AG04450 (cell line): ENCODE measurements at regions of chr7 and their contacts with region 1.

Region 1: DNA sequence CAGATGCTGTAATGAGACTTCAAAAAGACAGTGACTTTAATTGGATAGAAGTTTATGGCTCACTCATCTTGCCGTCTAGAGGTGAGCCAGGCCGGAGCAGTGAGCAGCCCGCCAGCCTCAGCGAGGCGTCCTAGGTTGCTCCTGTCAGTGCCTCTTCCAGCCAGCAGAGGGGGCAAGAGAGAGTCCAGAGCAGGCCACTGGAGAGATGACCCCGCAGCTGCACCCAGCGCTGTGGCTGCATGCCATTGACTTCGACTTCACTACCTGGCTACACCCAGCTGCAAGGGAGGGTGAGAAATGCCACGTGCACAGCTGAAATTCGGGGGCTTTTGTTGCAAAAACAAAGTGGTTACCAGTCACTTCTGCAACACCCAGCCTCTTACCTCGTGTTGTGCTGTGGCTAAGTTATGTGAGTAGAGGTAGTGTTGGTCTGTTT is 26.5 kb downstream of the NUB1 start:
- DNase-seq: peak; percentile 39
- H3K4me3 ChIP-seq: no peak overlapping the region
- H3K27ac ChIP-seq: no peak overlapping the region
- H3K27me3 ChIP-seq: no peaks in the 10 kb centered on the region
- CTCF ChIP-seq: peak; percentile 97

Region 2: GRCh38 chr7:150924369-150924781 is 443.8 kb before region 1 on chr7:
- CTCF ChIA-PET with region 1: no interaction called
- POLR2A ChIA-PET with region 1: no interaction called
- DNase-seq: no peak
- H3K4me3 ChIP-seq: no peak overlapping the region
- H3K27ac ChIP-seq: no peak overlapping the region
- H3K27me3 ChIP-seq: peaks cover 4% of the 10 kb centered on the region
- CTCF ChIP-seq: no peak

Region 3: GRCh38 chr7:151439855-151440798 is 72.0 kb after region 1 on chr7 and contains the start of gene CRYGN:
- CTCF ChIA-PET with region 1: interaction called, 14 read pairs
- POLR2A ChIA-PET with region 1: interaction called, 3 read pairs
- DNase-seq: no peak
- H3K4me3 ChIP-seq: peak within 1 kb of the TSS; percentile 41
- H3K27ac ChIP-seq: no peak within 1 kb of the TSS
- H3K27me3 ChIP-seq: peaks cover 14% of the 10 kb centered on the region
- CTCF ChIP-seq: no peak
- polyA plus RNA-seq, gene CRYGN: not detected in 2 replicates

Region 4: DNA sequence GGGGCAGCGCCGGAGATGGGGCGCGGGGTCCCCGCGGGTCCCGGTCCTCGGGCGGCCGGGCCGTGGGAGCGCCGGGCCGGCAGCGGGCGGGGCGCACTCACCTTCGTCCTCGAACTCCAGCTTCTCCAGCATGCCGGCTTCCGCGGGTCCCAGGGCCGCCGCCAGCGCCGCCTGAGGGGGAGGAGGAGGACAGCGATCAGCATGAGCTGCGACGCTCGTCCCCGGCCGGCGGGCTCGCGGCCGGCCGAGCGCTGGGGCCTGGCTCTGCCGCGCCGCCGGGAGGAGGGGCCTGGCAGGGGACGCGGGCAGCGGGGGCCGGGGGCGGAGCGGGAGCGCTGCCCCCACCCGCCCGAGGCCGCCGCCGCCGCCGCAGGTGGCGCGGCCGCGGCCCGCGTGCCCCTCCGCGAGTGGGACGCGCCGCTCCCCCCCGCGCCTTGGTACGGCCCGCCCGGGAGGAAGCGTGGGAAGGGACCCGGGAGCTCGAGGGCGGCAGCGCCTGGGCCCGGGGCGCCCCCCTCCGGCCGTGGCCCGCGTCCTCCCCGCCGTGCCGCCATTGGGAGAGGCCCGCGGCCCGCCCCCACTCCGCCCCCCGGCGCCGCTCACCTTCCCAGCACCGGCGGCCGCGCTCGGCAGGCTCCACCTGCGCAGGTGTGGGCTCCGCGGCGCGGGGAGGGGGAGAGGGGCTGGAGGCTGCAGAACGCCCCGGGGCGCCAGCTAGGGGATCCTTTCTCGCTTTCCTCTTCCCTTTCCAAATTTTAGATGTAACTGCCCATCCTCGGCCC is 264.0 kb after region 1 on chr7:
- CTCF ChIA-PET with region 1: interaction called, 10 read pairs
- POLR2A ChIA-PET with region 1: no interaction called
- DNase-seq: peak; percentile 21
- H3K4me3 ChIP-seq: peak overlapping the region; percentile 84
- H3K27ac ChIP-seq: no peak overlapping the region
- H3K27me3 ChIP-seq: no peaks in the 10 kb centered on the region
- CTCF ChIP-seq: 0 out of 2 replicates have a peak, but pooled peaks have one; percentile 21